HEK293T (cell line): ENCODE measurements at regions of chr1 and their contacts with region 1.

Region 1: GRCh38 chr1:116324411-116324810 is 48.6 kb upstream of the ATP1A1 start:
- DNase-seq: no peak

Region 2: DNA sequence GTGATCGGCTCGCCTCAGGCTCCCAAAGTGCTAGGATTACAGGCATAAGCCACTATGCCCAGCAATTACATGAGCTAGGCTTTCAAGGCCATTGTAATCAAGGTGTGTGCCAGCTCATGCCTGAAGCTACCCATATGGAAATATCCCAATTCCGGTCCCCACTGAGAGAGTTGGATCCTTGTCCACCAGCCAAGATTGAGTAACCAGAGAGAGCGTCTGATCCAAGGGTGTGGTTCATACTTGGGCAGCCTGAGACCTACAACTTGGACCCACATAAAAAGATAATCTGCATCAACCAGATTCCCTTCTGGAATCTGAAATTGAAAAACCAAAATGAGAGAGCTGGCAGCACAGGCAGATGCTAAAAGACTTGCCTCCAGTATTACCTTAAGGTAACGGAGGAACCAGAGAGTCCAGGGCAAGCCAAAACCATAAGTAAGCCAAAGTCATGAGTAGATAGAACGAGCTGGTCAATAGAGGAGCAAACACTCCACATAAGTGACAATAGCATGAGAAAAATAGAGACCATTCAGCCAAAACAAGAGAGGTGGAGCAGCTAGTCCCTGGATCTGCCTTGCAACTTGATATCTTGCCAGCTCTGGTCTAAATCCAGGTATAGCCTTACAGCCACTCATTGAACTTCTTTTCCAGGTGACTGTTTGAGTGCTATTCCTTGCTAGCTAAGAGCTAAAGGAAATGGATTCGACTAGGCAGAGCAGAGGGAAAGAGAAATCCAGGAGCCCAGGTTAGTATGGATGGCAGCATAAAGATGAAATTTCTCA is 15.1 kb before region 1 on chr1:
- CTCF ChIA-PET with region 1: no interaction called
- POLR2A ChIA-PET with region 1: no interaction called
- DNase-seq: no peak

Region 3: DNA sequence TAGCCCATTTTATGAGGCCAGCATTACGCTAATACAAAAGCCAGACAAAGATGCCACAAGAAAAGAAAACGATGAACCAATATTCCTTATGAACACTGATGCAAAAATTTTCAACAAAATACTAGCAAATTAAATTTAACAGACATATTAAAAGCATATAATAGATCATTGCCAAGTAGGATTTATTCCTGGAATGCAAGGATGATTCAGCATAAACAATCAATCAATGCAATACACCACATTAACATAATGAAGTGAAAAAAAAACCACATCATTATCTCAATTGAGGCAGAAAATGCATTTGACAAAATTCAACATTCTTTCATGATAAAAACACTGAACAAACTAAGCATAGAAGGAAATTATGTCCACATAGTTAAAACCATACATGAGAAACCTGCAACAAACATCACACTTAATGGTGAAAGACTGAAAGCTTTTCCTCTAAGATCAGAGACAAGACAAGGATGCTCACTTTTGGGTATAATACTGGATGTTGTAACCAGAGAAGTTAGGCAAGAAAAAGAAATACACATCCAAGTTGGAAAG is 25.8 kb after region 1 on chr1:
- CTCF ChIA-PET with region 1: interaction called, 14 read pairs
- POLR2A ChIA-PET with region 1: no interaction called
- DNase-seq: no peak

Region 4: GRCh38 chr1:116496380-116496779 is 172.0 kb after region 1 on chr1:
- CTCF ChIA-PET with region 1: no interaction called
- POLR2A ChIA-PET with region 1: no interaction called
- DNase-seq: no peak